ENCODE measurements at regions of chr7 and their contacts with region 1.

Region 1: DNA sequence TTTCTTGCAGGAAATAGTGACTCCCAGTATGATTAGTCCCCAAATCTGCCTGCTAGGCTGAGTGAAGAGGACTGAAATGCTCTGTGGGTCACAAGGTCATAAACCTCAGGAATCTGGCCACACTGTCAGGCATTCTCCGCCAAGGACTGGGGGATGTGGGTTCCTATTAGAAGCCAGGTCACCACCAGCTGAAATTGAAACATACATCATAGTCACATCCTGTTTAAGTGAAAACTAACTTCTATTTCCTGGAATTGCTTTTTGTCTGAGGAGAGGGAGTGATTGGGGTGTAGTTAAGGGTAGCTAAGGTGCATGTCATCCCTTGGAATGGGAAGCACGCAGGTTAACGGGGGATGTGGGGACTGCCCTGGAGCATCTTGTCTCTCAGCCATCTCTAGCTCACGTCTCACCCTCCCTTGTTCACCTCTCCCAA is 11.9 kb upstream of the GSAP start:
- DNase-seq: peak; percentile 31
- H3K4me3 Mint-ChIP-seq: peak overlapping the region; percentile 19
- H3K27ac Mint-ChIP-seq: peak overlapping the region; percentile 87
- H3K4me1 Mint-ChIP-seq: peaks cover 46% of the 10 kb centered on the region
- H3K27me3 Mint-ChIP-seq: peaks cover 2% of the 10 kb centered on the region

Region 2: GRCh38 chr7:77439572-77439971 is 11.5 kb after region 1 on chr7:
- CTCF ChIA-PET with region 1: interaction called, 13 read pairs
- POLR2A ChIA-PET with region 1: no interaction called
- DNase-seq: no peak
- H3K4me3 Mint-ChIP-seq: no peak overlapping the region
- H3K27ac Mint-ChIP-seq: no peak overlapping the region
- H3K4me1 Mint-ChIP-seq: peaks cover 2% of the 10 kb centered on the region
- H3K27me3 Mint-ChIP-seq: peaks cover 5% of the 10 kb centered on the region